ENCODE measurements at regions of chr12 and their contacts with region 1.

Region 1: GRCh38 chr12:96571101-96571862 is 81.9 kb downstream of the CFAP54 start:
- DNase-seq: no peak
- H3K4me3 Mint-ChIP-seq: peak overlapping the region; percentile 15
- H3K27ac Mint-ChIP-seq: peak overlapping the region; percentile 40
- H3K4me1 Mint-ChIP-seq: peaks cover 14% of the 10 kb centered on the region
- H3K27me3 Mint-ChIP-seq: no peaks in the 10 kb centered on the region

Region 2: GRCh38 chr12:96427269-96427729 is 144.0 kb before region 1 on chr12:
- intact Hi-C with region 1: loop called (anchors 1 kb)
- DNase-seq: no peak
- H3K4me3 Mint-ChIP-seq: peak overlapping the region; percentile 1
- H3K27ac Mint-ChIP-seq: peak overlapping the region; percentile 53
- H3K4me1 Mint-ChIP-seq: peaks cover 52% of the 10 kb centered on the region
- H3K27me3 Mint-ChIP-seq: peaks cover 5% of the 10 kb centered on the region

Region 3: DNA sequence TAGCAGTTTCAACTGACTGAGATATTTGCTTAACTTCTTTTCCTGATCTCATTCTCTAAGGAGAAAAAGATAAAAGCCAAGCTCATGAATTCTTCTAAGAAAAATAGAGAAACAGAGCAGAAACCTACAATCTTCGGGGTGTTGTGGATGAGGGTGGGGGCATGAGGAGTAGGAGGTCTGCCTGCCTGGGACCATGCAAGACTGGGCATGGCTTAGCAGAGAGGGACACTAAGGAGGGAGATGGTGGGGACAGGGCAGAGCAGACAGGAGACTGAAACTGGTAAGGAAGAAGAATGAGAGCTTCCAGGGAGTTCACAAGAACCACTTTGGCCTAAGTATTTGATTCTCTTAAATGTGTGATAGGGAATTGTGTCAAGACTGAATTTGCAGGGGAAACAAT is 106.1 kb after region 1 on chr12:
- intact Hi-C with region 1: no loop called
- DNase-seq: no peak
- H3K4me3 Mint-ChIP-seq: no peak overlapping the region
- H3K27ac Mint-ChIP-seq: no peak overlapping the region
- H3K4me1 Mint-ChIP-seq: no peaks in the 10 kb centered on the region
- H3K27me3 Mint-ChIP-seq: peaks cover 6% of the 10 kb centered on the region

Region 4: DNA sequence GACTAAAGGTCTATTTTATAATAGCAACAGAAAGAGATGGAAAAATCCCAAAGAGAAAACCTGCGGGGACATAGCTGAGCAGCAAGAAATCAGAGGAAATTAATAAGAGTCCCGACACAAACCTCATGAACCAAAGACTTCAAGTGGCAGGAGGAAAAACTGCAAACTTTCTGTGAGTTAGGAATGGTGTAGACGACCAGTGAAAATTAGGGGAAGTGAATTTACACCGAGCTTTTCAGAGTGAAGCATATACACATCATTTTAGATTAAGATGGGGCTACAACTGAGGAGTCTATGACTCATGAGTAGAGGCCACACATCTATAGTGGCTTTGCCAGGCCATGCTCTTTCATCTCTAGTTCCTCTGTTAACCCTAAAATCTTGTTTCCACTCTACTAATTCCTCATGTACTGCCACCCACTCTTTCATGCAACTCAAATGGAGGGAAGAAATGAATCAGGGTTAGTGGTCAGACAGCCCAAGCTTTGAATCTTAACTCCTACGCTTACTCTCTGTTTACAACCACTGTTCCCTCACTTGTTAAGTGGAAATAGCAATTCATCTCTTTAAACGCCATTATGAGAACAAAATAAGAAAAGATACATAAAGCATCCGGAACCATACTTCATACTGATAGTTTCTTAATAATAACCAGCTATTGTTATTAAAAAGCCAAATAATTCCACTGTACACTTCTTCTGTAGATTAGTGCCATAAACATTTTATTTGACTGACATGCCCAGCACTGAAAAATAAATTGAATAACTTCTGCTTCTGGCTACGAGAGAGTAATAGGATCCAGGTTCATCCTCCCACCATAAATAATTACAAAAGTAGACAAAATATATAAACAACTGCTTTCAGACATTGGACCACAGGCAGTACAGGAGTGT is 1110.6 kb after region 1 on chr12:
- intact Hi-C with region 1: loop called (anchors 5 kb)
- DNase-seq: no peak
- H3K4me3 Mint-ChIP-seq: no peak overlapping the region
- H3K27ac Mint-ChIP-seq: no peak overlapping the region
- H3K4me1 Mint-ChIP-seq: no peaks in the 10 kb centered on the region
- H3K27me3 Mint-ChIP-seq: no peaks in the 10 kb centered on the region